ENCODE measurements at regions of chr1 and their contacts with region 1.

Region 1: DNA sequence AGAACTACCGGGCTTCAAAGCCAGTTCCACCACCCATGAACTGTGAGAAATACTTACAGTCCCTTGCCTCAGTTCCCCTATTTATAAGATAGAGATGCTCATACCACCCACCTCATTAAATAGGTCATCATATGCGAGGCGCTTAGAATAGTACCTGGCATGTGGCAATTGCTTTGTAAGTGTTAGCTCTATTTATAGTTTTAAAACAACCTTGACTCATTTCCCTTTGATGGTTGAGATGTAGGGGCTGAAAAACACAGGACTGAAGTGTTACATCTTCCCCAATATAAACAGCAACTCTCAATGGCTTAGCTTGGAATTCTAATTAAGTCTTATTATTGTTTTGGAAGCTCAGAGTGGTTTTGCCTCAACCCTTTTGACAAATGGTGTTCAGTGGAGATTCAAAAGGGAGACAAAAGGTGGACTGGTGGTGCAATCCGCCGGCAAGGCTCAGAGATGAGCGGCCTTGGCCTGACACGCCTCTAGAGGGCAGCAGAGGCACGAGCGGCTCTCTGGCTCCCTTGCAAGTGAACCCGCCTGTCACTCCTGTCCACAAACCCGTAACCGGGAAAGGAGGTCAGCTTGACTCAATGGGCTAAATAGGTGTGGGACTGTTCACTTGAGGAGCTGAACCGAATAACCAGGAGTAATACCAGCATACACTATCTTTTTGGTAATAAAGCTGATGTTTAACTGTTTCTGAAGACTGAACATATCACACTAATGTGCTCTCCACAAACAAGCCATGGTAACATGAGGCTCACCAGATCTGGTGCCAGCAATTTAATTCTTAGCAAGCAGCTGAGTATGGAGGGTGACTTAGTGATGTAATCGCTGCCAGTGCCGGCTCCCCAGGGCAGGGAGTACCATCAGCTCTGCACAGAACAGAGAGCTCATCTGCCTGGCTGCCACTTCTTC is 19.5 kb upstream of the SMYD2 start:
- DNase-seq: peak; percentile 67 to 79 (median 74)
- H3K4me3 ChIP-seq: no peak overlapping the region
- H3K4me3 Mint-ChIP-seq: peak overlapping the region in 2 of 8 donors; percentile 25 to 52
- H3K27ac ChIP-seq: no peak overlapping the region
- H3K27ac Mint-ChIP-seq: no peak overlapping the region
- H3K4me1 ChIP-seq: peaks cover 5% of the 10 kb centered on the region
- H3K4me1 Mint-ChIP-seq: peaks cover 0 to 4% (median 0%) of the 10 kb centered on the region in 4 donors
- H3K27me3 ChIP-seq: peaks cover 26% of the 10 kb centered on the region
- H3K27me3 Mint-ChIP-seq: peaks cover 44 to 48% of the 10 kb centered on the region in 2 donors

Region 2: GRCh38 chr1:214213136-214213535 is 48.3 kb before region 1 on chr1:
- CTCF ChIA-PET with region 1: interaction called, 21 read pairs
- POLR2A ChIA-PET with region 1: no interaction called
- intact Hi-C with region 1: no loop called
- DNase-seq: no peak
- H3K4me3 ChIP-seq: no peak overlapping the region
- H3K4me3 Mint-ChIP-seq: no peak overlapping the region
- H3K27ac ChIP-seq: no peak overlapping the region
- H3K27ac Mint-ChIP-seq: no peak overlapping the region
- H3K4me1 ChIP-seq: no peaks in the 10 kb centered on the region
- H3K4me1 Mint-ChIP-seq: peaks cover 0 to 5% (median 3%) of the 10 kb centered on the region in 4 donors
- H3K27me3 ChIP-seq: no peaks in the 10 kb centered on the region
- H3K27me3 Mint-ChIP-seq: peaks cover 13 to 16% of the 10 kb centered on the region in 2 donors

Region 3: GRCh38 chr1:214281021-214281719 is 19.7 kb after region 1 on chr1 and contains the start of gene SMYD2:
- CTCF ChIA-PET with region 1: interaction called, 48 read pairs
- POLR2A ChIA-PET with region 1: interaction called, 4 read pairs
- intact Hi-C with region 1: loop called (anchors 1 kb)
- DNase-seq: peak; percentile 67 to 77 (median 72)
- H3K4me3 ChIP-seq: peak within 1 kb of the TSS; percentile 79
- H3K4me3 Mint-ChIP-seq: peak within 1 kb of the TSS; percentile 89 to 96 (median 92)
- H3K27ac ChIP-seq: peak within 1 kb of the TSS; percentile 68
- H3K27ac Mint-ChIP-seq: peak within 1 kb of the TSS; percentile 69 to 97 (median 93)
- H3K4me1 ChIP-seq: peaks cover 40% of the 10 kb centered on the region
- H3K4me1 Mint-ChIP-seq: peaks cover 34 to 56% (median 45%) of the 10 kb centered on the region in 4 donors
- H3K27me3 ChIP-seq: no peaks in the 10 kb centered on the region
- H3K27me3 Mint-ChIP-seq: no peaks in the 10 kb centered on the region
- total RNA-seq, gene SMYD2: 41.4 to 41.9 TPM

Region 4: GRCh38 chr1:214310777-214311690 is 49.6 kb after region 1 on chr1:
- CTCF ChIA-PET with region 1: interaction called, 26 read pairs
- POLR2A ChIA-PET with region 1: no interaction called
- intact Hi-C with region 1: no loop called
- DNase-seq: peak in 3 of 5 donors; percentile 17 to 28 (median 19)
- H3K4me3 ChIP-seq: peak overlapping the region in 1 of 2 donors; percentile 48
- H3K4me3 Mint-ChIP-seq: peak overlapping the region; percentile 70 to 85 (median 79)
- H3K27ac ChIP-seq: no peak overlapping the region
- H3K27ac Mint-ChIP-seq: peak overlapping the region; percentile 8 to 90 (median 50)
- H3K4me1 ChIP-seq: peaks cover 22% of the 10 kb centered on the region
- H3K4me1 Mint-ChIP-seq: peaks cover 31 to 43% (median 36%) of the 10 kb centered on the region in 4 donors
- H3K27me3 ChIP-seq: no peaks in the 10 kb centered on the region
- H3K27me3 Mint-ChIP-seq: no peaks in the 10 kb centered on the region

Region 5: DNA sequence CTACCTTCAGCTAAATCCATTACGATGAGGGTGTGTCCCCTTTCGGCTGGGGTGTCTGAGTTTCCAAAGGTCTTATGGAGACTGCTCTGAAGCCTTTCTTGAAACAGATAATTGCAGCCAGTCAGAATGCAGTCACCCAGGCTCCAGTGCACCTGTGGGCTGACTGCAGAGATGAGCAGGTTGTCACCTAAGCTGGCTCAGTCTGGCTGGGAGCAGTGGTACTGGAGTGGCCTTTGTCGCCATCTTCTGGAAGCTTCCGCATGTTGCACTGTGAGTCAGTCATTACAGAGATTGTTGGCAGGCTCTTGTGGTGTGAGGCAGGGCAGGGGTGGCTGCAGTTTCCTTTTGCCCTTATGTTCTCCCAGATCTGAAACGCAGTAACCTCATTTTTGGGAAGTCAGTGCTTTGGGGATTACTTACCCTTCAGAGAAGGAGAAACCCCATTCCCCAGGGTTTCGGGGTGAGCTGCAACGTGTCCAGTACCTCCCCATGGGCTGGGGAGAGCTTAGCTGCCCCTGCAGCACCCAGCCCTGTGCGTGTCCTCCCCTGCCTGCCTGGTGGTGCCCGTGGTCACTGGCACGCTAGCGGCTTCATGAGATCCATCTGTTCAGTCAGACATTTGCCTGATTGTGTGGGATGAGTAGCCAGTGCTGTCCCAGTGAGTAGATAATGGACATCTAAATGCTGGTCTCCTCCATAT is 67.5 kb after region 1 on chr1:
- CTCF ChIA-PET with region 1: interaction called, 787 read pairs
- POLR2A ChIA-PET with region 1: interaction called, 10 read pairs
- intact Hi-C with region 1: loop called (anchors 1 kb)
- DNase-seq: peak; percentile 73 to 78 (median 74)
- H3K4me3 ChIP-seq: no peak overlapping the region
- H3K4me3 Mint-ChIP-seq: no peak overlapping the region
- H3K27ac ChIP-seq: no peak overlapping the region
- H3K27ac Mint-ChIP-seq: peak overlapping the region in 3 of 7 donors; percentile 36 to 64 (median 47)
- H3K4me1 ChIP-seq: no peaks in the 10 kb centered on the region
- H3K4me1 Mint-ChIP-seq: peaks cover 0 to 2% (median 0%) of the 10 kb centered on the region in 4 donors
- H3K27me3 ChIP-seq: no peaks in the 10 kb centered on the region
- H3K27me3 Mint-ChIP-seq: no peaks in the 10 kb centered on the region

Region 6: DNA sequence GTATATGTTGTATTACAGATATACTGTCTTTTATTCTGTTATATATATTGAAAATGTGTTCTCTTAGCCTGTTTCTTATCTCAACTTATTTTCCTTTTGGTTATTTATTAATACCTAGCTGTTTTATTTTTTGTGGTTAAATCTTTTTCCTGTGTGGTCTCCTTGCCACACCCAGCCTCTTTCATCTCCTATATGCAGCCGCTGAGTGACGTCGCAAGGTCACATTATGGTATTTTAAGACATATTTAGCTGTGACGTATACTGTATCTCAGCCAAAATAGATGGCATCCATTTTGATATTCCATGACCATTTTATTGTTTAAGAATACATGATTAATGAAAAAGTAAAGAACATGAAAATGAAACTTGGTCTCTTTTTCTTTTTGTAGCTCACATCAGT is 370.6 kb after region 1 on chr1:
- CTCF ChIA-PET with region 1: interaction called, 7 read pairs
- POLR2A ChIA-PET with region 1: no interaction called
- intact Hi-C with region 1: loop called (anchors 2 kb)
- DNase-seq: peak; percentile 65 to 80 (median 74)
- H3K4me3 ChIP-seq: peak overlapping the region in 1 of 2 donors; percentile 43
- H3K4me3 Mint-ChIP-seq: peak overlapping the region; percentile 33 to 75 (median 60)
- H3K27ac ChIP-seq: no peak overlapping the region
- H3K27ac Mint-ChIP-seq: peak overlapping the region; percentile 75 to 97 (median 94)
- H3K4me1 ChIP-seq: peaks cover 27% of the 10 kb centered on the region
- H3K4me1 Mint-ChIP-seq: peaks cover 11 to 34% (median 24%) of the 10 kb centered on the region in 4 donors
- H3K27me3 ChIP-seq: no peaks in the 10 kb centered on the region
- H3K27me3 Mint-ChIP-seq: no peaks in the 10 kb centered on the region

Measured in CD4-positive, alpha-beta memory T cell (primary cell).